ENCODE measurements at regions of chr16 and their contacts with region 1.

Region 1: DNA sequence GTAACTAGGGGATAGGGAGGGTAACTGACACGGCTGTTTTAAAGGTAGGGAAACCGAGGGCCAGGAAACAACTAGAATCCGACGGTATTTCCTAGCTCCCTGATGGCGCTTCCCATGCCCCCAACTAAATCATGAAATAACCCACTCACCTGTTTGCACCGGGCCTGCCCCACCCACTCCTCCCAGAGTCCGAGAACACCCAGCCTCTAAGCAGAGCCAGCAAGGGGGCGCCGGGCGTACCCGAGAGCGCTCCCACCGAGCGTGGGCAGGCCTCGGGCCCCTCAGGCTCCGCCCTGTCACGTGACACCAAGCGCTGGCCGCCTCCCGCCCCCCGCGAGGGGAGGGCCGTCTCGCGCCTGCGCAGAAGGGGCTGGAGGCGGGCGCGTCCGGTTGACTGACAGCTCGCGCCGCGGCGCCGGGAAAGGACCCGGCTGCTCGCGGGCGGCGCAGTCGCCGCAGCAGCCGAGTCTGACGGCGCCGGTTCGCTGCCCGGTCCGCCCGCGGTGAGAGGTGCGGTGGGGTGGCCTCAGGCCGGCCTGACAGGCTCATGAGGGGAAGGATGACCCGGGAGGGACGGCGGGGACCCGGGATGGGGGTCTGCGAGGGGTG is at the start of gene KIAA0513:
- DNase-seq: peak; percentile 92 to 100 (median 98)
- ATAC-seq: peak; percentile 80 to 83
- H3K4me3 Mint-ChIP-seq: peak within 1 kb of the TSS; percentile 86 to 97 (median 93)
- H3K27ac Mint-ChIP-seq: peak within 1 kb of the TSS; percentile 88 to 97 (median 94)
- H3K4me1 Mint-ChIP-seq: peaks cover 25 to 46% (median 39%) of the 10 kb centered on the region in 4 donors
- H3K27me3 Mint-ChIP-seq: no peaks in the 10 kb centered on the region
- polyA plus RNA-seq, gene KIAA0513: 4.5 to 12.1 (median 7.8) TPM

Region 2: DNA sequence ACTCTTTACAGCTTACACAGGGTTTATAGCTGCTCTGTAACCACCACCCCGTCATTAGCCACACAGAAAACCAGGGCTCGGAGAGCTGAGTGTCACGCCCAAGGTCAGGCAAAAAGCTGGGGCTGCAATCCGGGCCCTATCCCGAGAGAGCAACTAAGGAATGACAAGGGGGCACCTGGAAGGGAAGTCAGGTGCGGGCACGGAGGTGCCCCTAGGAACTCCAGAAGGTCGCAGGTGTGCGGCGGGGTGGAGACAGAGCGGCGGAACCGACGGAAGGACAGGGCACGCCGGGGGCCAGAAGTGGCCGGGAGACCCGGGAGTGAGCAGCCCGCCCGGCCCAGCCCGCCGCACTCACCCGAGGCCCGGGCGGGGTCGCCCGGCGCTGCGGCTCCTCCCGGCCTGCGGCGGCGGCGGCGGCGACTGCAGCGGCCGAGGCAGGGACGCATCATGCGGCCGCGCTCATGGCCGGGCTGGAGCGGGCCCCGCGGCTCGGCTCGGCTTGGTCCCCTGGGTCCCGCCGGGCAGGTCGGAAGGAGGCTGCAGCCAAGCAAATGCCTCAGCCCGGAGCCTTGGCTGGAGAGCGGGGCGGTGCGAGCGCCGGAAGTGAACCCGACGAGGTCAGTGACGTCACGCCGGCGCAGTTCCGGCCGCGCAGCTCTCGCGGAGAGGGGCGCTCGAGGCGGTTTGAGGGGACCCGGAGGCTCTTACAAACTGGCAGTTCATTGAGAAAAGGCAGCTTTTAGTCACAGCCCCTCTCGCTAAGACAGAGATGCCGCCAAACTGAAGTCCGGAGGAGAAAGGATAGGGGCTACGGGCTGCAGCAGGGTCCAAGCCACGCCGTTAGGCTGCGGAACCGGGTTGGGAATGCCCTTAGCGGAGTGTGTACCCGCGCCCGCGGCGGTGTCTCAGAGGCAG is 16.3 kb before region 1 on chr16 and contains the start of gene ZDHHC7:
- POLR2A ChIA-PET with region 1: interaction called, 42 read pairs
- DNase-seq: peak; percentile 78 to 92 (median 86)
- ATAC-seq: peak; percentile 93 to 94
- H3K4me3 Mint-ChIP-seq: peak within 1 kb of the TSS; percentile 95 to 99 (median 97)
- H3K27ac Mint-ChIP-seq: peak within 1 kb of the TSS; percentile 98 to 100 (median 99)
- H3K4me1 Mint-ChIP-seq: peaks cover 20 to 55% (median 45%) of the 10 kb centered on the region in 4 donors
- H3K27me3 Mint-ChIP-seq: no peaks in the 10 kb centered on the region
- polyA plus RNA-seq, gene ZDHHC7: 28.8 to 45.3 (median 37.7) TPM

Region 3: GRCh38 chr16:85046931-85047866 is 19.7 kb after region 1 on chr16:
- POLR2A ChIA-PET with region 1: interaction called, 26 read pairs
- DNase-seq: peak in 3 of 10 donors; percentile 12 to 30 (median 21)
- ATAC-seq: peak; percentile 84 to 96
- H3K4me3 Mint-ChIP-seq: peak overlapping the region; percentile 58 to 83 (median 72)
- H3K27ac Mint-ChIP-seq: peak overlapping the region; percentile 83 to 93 (median 89)
- H3K4me1 Mint-ChIP-seq: peaks cover 25 to 66% (median 41%) of the 10 kb centered on the region in 4 donors
- H3K27me3 Mint-ChIP-seq: peaks cover 0 to 1% (median 0%) of the 10 kb centered on the region in 5 donors

Region 4: GRCh38 chr16:85055503-85056210 is 28.2 kb after region 1 on chr16:
- POLR2A ChIA-PET with region 1: interaction called, 35 read pairs
- DNase-seq: peak; percentile 40 to 92 (median 76)
- ATAC-seq: peak; percentile 90 to 96
- H3K4me3 Mint-ChIP-seq: peak overlapping the region; percentile 77 to 92 (median 82)
- H3K27ac Mint-ChIP-seq: peak overlapping the region; percentile 92 to 99 (median 96)
- H3K4me1 Mint-ChIP-seq: peaks cover 27 to 79% (median 46%) of the 10 kb centered on the region in 4 donors
- H3K27me3 Mint-ChIP-seq: no peaks in the 10 kb centered on the region

Region 5: DNA sequence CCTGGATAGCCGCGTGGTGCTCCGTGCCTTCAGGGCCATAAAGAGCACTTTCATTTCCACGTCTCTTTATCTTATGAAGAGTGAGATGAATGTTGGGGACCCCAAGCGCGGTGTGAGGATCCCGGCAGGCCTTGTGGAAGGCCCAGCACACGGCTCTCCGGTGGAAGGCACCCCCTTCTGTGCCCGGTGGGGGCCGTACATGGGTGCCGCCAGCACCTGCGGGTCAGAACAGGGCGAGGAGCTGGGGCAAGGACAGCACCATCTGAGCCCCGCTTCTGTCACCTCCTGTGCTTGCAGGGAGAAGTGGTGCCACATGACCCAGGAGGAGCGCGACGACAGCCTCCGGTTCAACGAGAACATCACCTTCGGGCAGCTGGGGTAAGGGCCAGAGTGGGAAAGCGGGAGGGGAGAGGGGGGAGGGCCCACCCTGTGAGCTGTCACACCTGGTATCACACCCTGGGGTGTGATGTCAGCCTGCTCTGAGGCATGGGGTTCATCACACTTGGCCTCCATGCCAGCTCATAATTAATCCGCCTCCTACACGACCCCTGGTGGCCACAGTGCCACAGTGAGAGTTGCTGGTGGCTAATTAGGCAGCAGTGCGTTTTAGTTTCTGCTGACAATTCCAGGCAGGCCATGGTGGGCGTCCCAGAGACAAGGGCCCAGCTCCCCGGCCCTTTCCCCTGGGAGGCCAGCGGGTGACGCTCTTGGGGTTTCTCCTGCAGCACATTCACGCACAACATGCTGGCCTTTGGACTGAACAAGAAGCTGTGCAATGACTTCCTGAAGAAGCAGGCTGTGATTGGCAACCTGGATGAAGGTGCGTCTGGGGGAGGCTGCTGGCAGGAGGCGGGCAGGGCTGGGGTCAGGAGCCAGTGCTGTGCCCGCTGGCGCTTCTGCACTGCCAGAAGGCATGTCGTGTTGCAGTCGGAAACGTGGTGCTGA is 59.2 kb after region 1 on chr16:
- POLR2A ChIA-PET with region 1: interaction called, 17 read pairs
- DNase-seq: peak; percentile 48 to 87 (median 72)
- ATAC-seq: peak; percentile 78 to 90
- H3K4me3 Mint-ChIP-seq: no peak overlapping the region
- H3K27ac Mint-ChIP-seq: peak overlapping the region in 5 of 10 donors; percentile 21 to 69 (median 34)
- H3K4me1 Mint-ChIP-seq: peaks cover 6 to 43% (median 37%) of the 10 kb centered on the region in 4 donors
- H3K27me3 Mint-ChIP-seq: no peaks in the 10 kb centered on the region